PC-9 (cell line): ENCODE measurements at regions of chr10 and their contacts with region 1.

Region 1: DNA sequence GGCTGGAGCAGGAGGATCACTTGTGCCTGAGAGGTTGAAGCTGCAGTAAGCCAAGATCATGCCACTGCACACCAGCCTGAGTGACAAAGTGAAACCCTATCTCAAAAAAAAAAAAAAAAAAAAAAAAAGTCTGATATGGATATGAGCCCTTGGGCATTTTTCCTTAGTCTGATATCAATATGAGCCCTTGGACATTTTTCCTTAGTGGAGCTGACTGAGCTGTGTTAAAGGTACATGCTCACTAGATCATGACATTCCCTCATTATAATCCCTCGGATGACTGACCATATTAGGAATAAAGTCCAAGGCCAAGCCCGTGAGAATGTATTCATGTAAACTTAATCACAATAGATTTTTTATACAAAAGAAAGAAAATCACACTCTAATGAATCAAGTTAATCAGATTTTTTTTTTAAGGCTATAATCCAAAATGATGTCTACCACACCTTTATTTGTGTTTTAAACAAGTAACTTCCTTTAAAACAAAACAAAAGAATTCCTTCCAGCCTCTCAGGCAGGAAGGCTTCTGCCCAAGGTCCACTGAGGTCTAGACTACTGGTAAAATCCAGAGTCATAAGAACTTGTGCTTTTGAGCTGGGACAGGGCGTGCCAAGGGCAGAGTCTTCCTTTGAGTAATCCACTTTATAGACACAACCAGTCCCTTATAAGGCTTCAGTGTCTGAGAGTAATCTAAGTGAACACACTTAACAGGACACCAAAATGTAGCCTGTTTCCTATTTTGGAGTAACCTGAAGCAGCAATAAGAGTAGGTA is 5.5 kb downstream of the PPA1 start:
- DNase-seq: peak in 1 of 2 experiments; percentile 13
- H3K4me3 ChIP-seq: no peak overlapping the region
- H3K27ac ChIP-seq: peak overlapping the region; percentile 14
- H3K4me1 ChIP-seq: peaks cover 68% of the 10 kb centered on the region
- H3K27me3 ChIP-seq: no peaks in the 10 kb centered on the region
- CTCF ChIP-seq: no peak

Region 2: DNA sequence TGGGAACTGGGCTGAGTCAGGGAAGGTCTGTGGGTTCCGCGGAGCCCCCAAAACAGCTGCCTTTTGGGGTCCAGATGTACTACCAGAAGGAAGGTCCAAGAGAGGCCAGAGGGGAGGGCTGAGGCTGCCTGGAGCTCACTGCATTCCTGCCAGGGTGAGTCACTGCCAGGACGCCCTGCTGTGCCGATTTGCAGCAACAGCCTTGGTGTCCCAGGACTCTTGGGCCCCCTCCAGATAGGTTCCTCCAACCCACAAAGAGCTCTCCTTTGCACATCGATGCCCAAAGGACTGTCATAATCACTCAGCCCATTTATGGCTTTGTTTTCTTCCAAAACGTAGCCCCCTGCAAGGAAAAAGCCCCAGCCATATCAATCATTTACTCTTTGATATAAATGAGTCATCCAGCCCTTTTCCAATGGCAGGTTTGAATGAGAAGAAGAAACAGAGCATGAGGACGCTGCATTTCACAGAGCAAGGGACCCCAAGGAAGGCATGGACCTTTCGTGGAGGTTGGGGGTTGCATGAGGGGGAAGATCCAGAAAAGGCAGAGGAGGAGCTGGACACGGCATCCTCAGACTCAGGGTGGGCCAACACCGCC is 458.2 kb before region 1 on chr10:
- CTCF ChIA-PET with region 1: no interaction called
- POLR2A ChIA-PET with region 1: interaction called, 12 read pairs
- intact Hi-C with region 1: no loop called
- DNase-seq: peak; percentile 69 to 81
- H3K4me3 ChIP-seq: no peak overlapping the region
- H3K27ac ChIP-seq: no peak overlapping the region
- H3K4me1 ChIP-seq: peaks cover 14% of the 10 kb centered on the region
- H3K27me3 ChIP-seq: no peaks in the 10 kb centered on the region
- CTCF ChIP-seq: no peak

Region 3: DNA sequence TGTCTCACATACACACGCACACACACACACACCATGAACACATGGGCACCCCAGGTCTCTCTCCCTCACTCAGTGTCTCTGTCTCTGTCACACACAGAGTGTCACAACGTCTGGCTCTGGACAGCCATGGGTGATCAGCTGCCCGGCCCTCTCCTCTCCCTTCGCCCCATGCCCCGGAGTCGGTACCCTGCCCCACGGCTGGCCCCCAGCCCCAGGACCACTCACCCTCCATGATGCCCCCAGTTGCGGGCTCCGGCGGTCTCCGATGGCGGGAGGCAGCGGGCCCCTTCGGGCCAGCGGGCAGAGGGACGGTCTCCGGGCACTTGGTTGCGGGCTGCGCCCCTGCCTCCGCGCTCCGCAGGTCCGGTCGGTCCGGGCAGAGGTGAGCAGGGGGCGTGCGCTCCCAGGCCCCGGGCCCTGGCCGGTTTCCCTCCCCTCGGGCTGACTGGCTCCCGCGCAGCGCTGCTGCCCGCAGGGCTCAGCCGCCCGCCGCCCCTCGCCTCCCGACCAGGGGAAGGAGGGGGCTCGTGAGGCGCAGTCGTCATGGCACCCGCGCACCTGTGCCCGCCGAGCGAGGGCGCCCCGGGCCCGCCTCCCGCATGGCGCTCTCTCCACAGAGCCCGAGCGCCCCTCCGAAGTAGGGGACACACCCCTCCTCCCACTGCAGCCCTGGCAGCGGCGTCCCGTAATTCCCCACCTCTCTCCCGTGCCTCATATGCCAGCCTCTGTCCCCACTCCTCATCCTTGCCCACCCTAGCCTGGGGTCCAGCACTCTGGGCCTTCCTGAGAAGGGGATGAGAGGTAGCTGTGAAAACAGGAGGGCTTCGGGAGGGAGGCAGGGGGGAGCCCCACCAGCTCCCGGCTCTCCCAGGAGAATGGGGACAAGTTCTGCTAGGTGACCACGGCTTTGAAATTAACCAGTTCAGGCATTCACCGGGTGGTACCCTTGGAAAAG is 56.0 kb after region 1 on chr10 and contains the start of gene NPFFR1:
- CTCF ChIA-PET with region 1: no interaction called
- POLR2A ChIA-PET with region 1: no interaction called
- intact Hi-C with region 1: no loop called
- DNase-seq: no peak
- H3K4me3 ChIP-seq: no peak within 1 kb of the TSS
- H3K27ac ChIP-seq: no peak within 1 kb of the TSS
- H3K4me1 ChIP-seq: no peaks in the 10 kb centered on the region
- H3K27me3 ChIP-seq: peaks cover 26% of the 10 kb centered on the region
- CTCF ChIP-seq: no peak
- total RNA-seq, gene NPFFR1: 0.05 and 0.09 TPM in 2 replicates

Region 4: GRCh38 chr10:70295321-70295720 is 67.6 kb after region 1 on chr10:
- CTCF ChIA-PET with region 1: no interaction called
- POLR2A ChIA-PET with region 1: interaction called, 10 read pairs
- intact Hi-C with region 1: no loop called
- DNase-seq: peak in 1 of 2 experiments; percentile 31
- H3K4me3 ChIP-seq: no peak overlapping the region
- H3K27ac ChIP-seq: no peak overlapping the region
- H3K4me1 ChIP-seq: peaks cover 13% of the 10 kb centered on the region
- H3K27me3 ChIP-seq: no peaks in the 10 kb centered on the region
- CTCF ChIP-seq: no peak

Region 5: DNA sequence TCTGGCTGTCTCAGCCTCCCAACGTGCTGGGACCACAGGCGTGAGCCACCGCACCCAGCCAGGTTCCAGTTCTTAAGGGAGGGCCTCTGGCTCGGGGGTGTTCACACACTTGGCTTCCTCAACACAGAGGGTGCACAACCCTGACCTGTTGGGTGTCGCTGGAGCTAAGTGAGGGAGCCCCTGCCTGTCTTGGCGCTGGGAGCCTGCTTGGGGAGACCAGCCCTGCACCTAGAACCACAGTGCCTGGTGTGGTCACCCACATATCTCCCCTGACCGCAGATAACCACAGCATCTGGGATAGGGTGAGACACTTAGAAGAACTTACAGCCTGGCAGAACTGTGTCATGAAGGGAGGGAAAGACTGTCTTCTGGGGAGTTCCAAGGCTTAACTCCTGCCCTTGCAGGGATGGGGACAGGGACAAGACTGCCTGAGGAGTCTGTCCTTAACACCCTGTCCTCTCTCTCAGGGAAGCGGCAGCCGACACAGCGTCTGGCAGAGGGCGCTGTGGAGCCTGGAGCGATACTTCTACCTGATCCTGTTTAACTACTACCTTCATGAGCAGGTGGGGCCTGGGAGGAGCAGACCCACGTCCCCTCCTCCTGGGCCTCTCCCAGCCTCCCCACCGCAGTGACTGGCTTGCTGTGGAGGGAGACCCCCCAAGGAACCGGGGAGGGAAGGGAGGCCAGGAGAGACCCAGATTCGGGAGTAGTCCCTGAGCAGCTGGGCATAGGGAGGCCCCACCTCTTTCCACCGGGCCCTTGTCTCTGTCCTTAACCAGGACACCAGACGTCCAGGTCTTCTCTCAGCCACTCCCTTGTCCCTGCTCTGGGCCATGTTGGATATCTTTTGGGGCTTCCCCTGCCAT is 309.8 kb after region 1 on chr10:
- CTCF ChIA-PET with region 1: no interaction called
- POLR2A ChIA-PET with region 1: no interaction called
- intact Hi-C with region 1: loop called (anchors 10 kb)
- DNase-seq: peak in 1 of 2 experiments; percentile 61
- H3K4me3 ChIP-seq: no peak overlapping the region
- H3K27ac ChIP-seq: no peak overlapping the region
- H3K4me1 ChIP-seq: no peaks in the 10 kb centered on the region
- H3K27me3 ChIP-seq: no peaks in the 10 kb centered on the region
- CTCF ChIP-seq: peak; percentile 73

Region 6: DNA sequence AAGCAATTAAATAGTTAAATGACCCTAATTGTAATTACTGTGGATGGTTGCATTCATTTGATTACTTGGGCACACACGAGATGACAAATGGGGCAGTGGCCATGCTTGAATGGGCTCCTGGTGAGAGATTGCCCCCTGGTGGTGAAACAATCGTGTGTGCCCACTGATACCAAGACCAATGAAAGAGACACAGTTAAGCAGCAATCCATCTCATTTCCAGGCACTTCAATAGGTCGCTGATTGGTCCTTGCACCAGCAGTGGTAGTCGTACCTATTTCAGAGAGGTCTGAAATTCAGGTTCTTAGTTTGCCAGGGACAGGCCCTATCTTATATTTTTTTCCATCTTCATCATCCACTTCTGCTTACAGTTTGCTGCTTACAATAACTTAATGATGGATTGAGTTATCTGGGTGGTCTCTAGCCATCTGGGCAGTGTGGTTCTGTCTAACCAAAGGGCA is 652.4 kb after region 1 on chr10:
- CTCF ChIA-PET with region 1: no interaction called
- POLR2A ChIA-PET with region 1: no interaction called
- intact Hi-C with region 1: loop called (anchors 10 kb)
- DNase-seq: peak; percentile 59 to 76
- H3K4me3 ChIP-seq: no peak overlapping the region
- H3K27ac ChIP-seq: no peak overlapping the region
- H3K4me1 ChIP-seq: 0 out of 2 replicates have a peak, but pooled peaks cover 8% of the 10 kb centered on the region
- H3K27me3 ChIP-seq: no peaks in the 10 kb centered on the region
- CTCF ChIP-seq: peak; percentile 97